Calu3 (cell line): ENCODE measurements at regions of chr2 and their contacts with region 1.

Region 1: DNA sequence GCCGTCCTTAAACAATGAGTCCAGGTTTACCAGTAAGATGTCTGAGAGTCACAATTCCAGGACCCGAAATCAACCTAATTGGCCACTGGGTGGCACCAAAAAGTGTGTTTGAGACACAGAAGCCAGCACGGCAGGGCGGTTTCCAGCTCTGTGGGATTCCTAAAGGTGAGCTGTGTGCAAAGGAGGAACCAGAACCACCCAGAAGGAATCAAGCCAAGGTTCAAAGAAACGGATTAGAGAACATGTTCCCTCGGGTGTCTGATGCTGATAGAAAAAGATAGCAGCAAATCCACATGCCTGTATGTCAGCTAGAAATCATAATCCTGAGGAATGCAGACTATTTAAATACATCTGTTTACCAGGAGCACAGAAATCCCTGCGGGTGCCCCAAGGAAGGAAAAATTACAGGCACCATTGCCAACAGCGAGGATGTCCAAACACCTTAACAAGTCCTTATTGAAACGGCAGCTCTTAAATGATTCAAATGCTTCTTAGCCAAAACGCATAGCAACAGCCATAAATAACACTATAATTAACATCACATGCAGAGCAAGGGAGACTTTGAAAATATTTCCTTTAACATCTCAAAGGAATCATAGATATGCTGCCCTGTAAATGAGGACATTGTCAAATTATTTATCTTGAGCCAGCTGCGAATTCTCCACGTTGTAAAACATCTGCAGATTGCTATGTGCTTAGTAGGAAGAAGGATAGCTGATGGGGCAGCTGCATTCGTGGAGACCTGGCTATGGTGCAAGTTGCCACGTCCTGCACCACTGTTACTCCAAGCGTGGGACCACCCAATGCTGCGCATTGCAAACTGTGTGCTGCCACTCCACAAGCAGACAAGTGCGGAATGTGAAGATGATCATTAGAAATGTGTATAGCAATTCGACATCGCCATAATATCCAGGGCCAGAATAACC is 318.7 kb upstream of the NCKAP5 start:
- DNase-seq: peak; percentile 80
- H3K4me3 Mint-ChIP-seq: no peak overlapping the region
- H3K27ac Mint-ChIP-seq: no peak overlapping the region
- H3K4me1 Mint-ChIP-seq: peaks cover 29% of the 10 kb centered on the region
- H3K27me3 Mint-ChIP-seq: peaks cover 12% of the 10 kb centered on the region
- CTCF ChIP-seq: peak; percentile 45

Region 2: GRCh38 chr2:134087371-134087921 is 200.4 kb after region 1 on chr2:
- CTCF ChIA-PET with region 1: no interaction called
- intact Hi-C with region 1: loop called (anchors 5 kb)
- DNase-seq: peak; percentile 71
- H3K4me3 Mint-ChIP-seq: no peak overlapping the region
- H3K27ac Mint-ChIP-seq: peak overlapping the region; percentile 48
- H3K4me1 Mint-ChIP-seq: peaks cover 34% of the 10 kb centered on the region
- H3K27me3 Mint-ChIP-seq: no peaks in the 10 kb centered on the region
- CTCF ChIP-seq: no peak

Region 3: DNA sequence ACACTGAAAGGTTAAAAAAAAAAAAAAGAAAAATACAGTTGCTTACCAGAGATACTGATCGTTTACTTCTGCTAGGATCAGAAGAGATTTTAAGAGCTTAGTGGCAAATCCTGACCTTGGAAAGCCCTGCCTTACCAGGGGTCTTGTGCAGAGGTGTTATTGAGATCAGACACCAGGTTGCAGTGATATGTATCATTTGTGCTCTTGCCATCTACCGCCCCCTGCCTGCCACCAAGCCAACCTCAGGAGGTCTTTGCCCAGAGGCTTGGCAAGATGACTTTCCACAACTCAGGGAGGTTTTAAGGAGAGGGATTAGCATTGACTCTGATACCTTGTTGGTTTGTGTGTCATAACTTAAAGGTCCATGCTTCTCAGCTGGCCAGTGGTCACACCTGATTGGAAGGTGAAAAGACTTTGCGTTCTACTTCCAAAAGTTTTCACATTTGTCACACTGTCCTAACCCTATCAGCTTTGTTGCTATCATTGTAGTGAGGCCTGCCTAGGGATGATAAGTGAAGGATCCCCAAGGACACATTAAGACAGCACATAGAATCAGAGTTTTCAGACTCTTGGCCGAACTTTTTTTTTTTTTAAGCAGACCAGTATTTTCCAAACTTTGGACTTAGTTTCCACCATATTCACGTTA is 320.7 kb after region 1 on chr2:
- CTCF ChIA-PET with region 1: interaction called, 3 read pairs
- intact Hi-C with region 1: loop called (anchors 5 kb)
- DNase-seq: peak; percentile 70
- H3K4me3 Mint-ChIP-seq: no peak overlapping the region
- H3K27ac Mint-ChIP-seq: no peak overlapping the region
- H3K4me1 Mint-ChIP-seq: no peaks in the 10 kb centered on the region
- H3K27me3 Mint-ChIP-seq: no peaks in the 10 kb centered on the region
- CTCF ChIP-seq: peak; percentile 63

Region 4: DNA sequence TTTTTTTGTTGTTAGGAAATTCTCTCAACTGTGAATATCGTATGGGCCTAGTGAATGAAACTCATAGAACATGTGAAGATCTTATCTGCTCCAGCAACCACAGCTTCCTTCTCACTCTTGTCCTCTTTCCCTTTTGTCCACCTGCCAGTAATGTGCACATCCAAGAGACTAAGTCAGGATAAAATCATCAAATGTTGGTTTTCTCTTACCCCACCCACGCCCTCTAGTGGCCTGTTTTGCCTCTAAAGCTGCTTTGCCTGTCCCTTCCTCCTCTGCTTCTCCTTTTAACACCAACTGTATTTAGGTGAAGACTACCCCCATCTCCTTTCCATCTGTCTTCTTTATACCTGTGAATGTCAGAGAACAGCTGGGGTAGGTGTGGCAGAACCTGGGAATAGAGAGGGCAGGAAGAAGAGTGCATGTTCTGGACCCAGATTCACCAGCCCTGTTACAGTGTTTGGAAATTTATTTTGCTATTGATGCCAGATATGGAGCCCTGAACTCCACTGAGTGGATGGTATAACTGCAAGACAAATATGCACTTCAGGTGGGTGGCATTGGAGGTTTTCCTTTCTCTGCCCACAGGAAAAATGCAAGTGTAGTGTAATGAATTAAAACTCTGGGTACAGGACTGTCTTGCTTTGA is 358.5 kb after region 1 on chr2:
- CTCF ChIA-PET with region 1: interaction called, 13 read pairs
- intact Hi-C with region 1: loop called (anchors 10 kb)
- DNase-seq: peak; percentile 86
- H3K4me3 Mint-ChIP-seq: no peak overlapping the region
- H3K27ac Mint-ChIP-seq: peak overlapping the region; percentile 79
- H3K4me1 Mint-ChIP-seq: peaks cover 43% of the 10 kb centered on the region
- H3K27me3 Mint-ChIP-seq: no peaks in the 10 kb centered on the region
- CTCF ChIP-seq: peak; percentile 75

Region 5: GRCh38 chr2:134411828-134412638 is 525.0 kb after region 1 on chr2:
- CTCF ChIA-PET with region 1: interaction called, 28 read pairs
- intact Hi-C with region 1: loop called (anchors 2 kb)
- DNase-seq: peak; percentile 82
- H3K4me3 Mint-ChIP-seq: peak overlapping the region; percentile 60
- H3K27ac Mint-ChIP-seq: peak overlapping the region; percentile 88
- H3K4me1 Mint-ChIP-seq: peaks cover 97% of the 10 kb centered on the region
- H3K27me3 Mint-ChIP-seq: no peaks in the 10 kb centered on the region
- CTCF ChIP-seq: peak; percentile 52

Region 6: DNA sequence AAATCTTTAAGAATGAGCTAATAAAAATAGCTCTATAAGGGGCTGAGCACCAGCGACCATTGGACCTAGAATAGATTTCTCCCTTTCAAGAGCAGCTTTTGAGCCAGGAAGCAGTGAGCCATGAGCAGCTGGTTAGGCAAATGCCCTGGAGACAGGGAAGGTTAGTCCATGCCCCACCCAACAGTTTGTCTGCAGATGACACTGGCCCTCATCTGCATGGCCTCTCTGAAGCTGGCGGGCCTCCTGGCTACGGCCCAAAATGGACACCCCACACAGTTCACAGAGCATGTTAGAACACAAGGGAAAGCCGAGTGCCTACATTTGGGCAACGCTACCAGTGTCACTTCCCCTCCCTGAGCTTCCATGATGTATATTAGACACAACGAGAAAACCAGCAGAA is 567.9 kb after region 1 on chr2:
- CTCF ChIA-PET with region 1: interaction called, 9 read pairs
- intact Hi-C with region 1: loop called (anchors 1 kb)
- DNase-seq: no peak
- H3K4me3 Mint-ChIP-seq: no peak overlapping the region
- H3K27ac Mint-ChIP-seq: no peak overlapping the region
- H3K4me1 Mint-ChIP-seq: peaks cover 13% of the 10 kb centered on the region
- H3K27me3 Mint-ChIP-seq: no peaks in the 10 kb centered on the region
- CTCF ChIP-seq: no peak

Region 7: GRCh38 chr2:134897932-134898331 is 1010.9 kb after region 1 on chr2:
- CTCF ChIA-PET with region 1: no interaction called
- intact Hi-C with region 1: loop called (anchors 10 kb)
- DNase-seq: no peak
- H3K4me3 Mint-ChIP-seq: no peak overlapping the region
- H3K27ac Mint-ChIP-seq: no peak overlapping the region
- H3K4me1 Mint-ChIP-seq: peaks cover 5% of the 10 kb centered on the region
- H3K27me3 Mint-ChIP-seq: no peaks in the 10 kb centered on the region
- CTCF ChIP-seq: peak; percentile 46